ENCODE measurements at regions of chr10 and their contacts with region 1.

Region 1: DNA sequence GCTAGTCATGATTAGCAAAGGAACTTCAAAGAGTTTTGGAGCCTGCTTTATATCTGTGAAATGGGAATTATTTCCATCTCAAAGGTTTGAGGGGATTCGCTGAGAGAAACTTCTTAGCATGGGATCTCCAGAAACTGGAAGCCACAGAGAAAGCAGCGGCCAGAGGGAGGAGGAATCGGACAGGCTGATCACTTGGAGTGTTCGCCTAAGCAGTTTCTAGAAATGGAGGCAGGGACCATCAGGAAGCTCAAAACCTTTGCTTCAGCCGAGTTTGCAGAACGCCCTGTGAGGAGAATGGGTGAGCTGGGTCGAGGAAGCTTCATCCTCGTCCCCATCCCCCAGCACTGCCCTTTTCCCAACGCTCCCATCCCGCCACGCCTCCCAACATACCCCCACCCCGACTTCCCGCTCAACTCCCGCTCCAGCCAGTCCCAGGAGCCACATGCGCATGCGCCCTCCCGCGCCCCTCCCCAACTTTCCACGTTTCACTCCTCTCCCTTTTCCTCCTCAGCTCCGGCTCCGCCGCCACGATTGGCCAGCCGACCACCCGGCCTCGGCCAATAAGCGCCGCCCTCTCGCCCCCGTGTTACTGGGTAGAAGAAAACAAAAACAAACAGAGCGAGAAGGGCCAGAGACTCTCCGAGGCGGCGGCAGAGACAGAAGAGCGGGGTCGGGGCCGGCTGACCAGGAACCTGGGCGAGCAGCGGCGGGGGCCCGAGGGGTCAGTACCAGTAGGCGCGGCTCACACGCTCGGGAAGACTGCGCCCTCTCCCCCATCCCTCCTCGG is at the start of gene PDCD4:
- DNase-seq: peak; percentile 100
- H3K4me3 ChIP-seq: peak within 1 kb of the TSS; percentile 95
- H3K27ac ChIP-seq: peak within 1 kb of the TSS; percentile 93 to 99
- H3K4me1 ChIP-seq: peaks cover 8% of the 10 kb centered on the region
- H3K27me3 ChIP-seq: no peaks in the 10 kb centered on the region
- CTCF ChIP-seq: no peak
- EP300 ChIP-seq: no peak
- POLR2A ChIP-seq: peak; percentile 86
- total RNA-seq, gene PDCD4: 103 to 399 (median 185) TPM

Region 2: GRCh38 chr10:110820321-110820814 is 51.1 kb before region 1 on chr10:
- intact Hi-C with region 1: loop called in 2 of 4 experiments (anchors 5 kb)
- DNase-seq: peak; percentile 60 to 72 (median 66)
- H3K4me3 ChIP-seq: no peak overlapping the region
- H3K27ac ChIP-seq: peak overlapping the region; percentile 78 to 83
- H3K4me1 ChIP-seq: peaks cover 35% of the 10 kb centered on the region
- H3K27me3 ChIP-seq: no peaks in the 10 kb centered on the region
- CTCF ChIP-seq: no peak
- EP300 ChIP-seq: no peak
- POLR2A ChIP-seq: no peak

Region 3: DNA sequence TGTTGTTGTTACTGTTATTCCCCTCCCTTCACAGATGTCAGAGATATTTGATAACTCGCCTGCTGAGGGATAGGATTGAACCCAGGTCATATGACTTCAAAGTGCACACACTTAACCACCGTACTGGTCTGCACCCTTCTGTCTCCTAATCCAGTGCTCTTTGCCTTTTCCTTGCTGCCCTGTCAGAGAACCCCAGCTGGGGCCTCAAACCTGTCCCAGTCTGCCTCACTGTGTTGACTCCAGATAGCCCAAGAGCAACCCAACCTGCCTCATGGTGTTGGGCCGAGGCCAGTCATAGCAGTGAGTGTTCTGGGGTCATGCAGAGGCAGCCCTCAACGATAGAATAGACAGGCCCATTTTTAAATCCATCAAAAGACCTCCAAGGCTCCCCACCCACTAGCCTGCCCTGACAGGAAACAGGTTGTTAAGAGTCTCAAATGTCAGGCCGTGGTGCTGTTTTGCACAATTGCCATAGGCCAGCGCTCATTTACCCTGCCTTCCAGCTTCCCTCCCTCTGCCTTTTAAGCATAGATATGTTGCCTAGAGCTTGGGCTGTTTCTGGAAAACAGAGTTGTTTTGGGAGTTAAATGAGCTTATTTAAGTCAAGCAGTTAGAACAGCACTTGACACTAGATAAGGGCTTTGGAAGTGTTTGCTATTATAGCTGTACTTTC is 36.7 kb before region 1 on chr10:
- intact Hi-C with region 1: loop called in 1 of 4 experiments (anchors 5 kb)
- DNase-seq: peak; percentile 67 to 83 (median 74)
- H3K4me3 ChIP-seq: no peak overlapping the region
- H3K27ac ChIP-seq: peak overlapping the region; percentile 1 to 85
- H3K4me1 ChIP-seq: peaks cover 43% of the 10 kb centered on the region
- H3K27me3 ChIP-seq: no peaks in the 10 kb centered on the region
- CTCF ChIP-seq: no peak
- EP300 ChIP-seq: no peak
- POLR2A ChIP-seq: peak; percentile 18

Measured in ovary (tissue), 10 donors.